ENCODE measurements at regions of chr12 and their contacts with region 1.

Region 1: DNA sequence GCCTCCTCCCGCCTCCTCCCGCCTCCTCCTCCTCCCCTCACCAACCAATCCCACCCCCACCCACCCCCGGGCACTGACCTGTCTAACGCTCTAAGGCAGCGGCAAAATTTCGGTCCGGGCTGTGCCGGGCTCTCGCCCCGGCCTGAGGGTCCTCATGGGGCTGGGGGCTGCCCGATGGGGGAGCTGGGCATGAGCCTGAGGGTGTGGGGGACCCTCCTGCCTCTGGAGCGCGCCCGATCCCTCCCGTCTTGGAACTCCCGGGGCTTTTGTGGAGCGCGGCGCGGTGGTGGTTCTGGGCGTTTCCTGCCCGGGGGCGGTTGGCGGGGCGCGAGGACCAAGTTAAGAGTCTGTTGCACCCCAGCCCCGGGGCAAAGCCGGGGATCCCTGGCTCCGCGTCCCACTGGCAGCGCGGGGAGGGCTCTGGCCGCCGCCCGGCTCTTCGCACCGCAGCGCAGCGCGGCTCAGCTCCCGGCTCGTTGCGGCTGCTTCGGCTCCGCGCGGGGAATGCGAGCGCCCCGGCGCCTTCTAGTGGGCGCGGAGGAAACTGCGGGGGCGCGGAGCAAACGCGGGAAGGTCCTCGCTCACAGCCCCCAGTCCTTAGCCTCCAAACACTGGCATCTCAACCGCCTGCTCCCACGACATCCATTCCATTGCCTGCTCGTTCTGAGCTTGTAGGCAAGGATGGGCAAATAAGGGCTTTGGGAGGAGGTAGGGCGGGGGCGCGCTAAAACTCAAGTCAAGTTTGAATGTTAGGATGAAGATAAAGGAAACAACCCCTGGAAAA is at the start of gene B4GALNT1:
- DNase-seq: peak; percentile 70
- ATAC-seq: peak; percentile 90
- H3K4me3 Mint-ChIP-seq: peak within 1 kb of the TSS; percentile 53
- H3K27ac Mint-ChIP-seq: no peak within 1 kb of the TSS
- H3K4me1 Mint-ChIP-seq: peaks cover 9% of the 10 kb centered on the region
- H3K27me3 Mint-ChIP-seq: peaks cover 63% of the 10 kb centered on the region
- total RNA-seq, gene B4GALNT1: 2.4 to 8.2 TPM

Region 2: DNA sequence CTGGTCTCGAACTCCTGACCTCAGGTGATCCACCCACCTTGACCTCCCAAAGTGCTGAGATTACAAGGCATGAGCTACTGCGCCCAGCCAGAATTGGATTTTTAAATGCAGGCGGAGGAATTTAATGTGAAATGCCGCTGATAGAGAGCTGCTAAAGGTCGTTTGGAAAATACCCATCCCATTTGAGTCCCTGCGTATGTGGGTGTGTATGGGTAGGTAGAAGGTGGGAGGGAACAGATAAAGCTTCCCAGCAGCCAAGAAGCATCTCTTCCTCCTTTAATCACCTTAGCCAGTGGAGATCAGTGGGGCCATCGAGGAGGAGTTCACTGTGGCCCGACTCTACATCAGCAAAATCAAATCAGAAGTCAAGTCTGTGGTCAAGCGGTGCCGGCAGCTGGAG is 58.1 kb before region 1 on chr12:
- CTCF ChIA-PET with region 1: no interaction called
- DNase-seq: no peak
- ATAC-seq: no peak
- H3K4me3 Mint-ChIP-seq: no peak overlapping the region
- H3K27ac Mint-ChIP-seq: no peak overlapping the region
- H3K4me1 Mint-ChIP-seq: no peaks in the 10 kb centered on the region
- H3K27me3 Mint-ChIP-seq: no peaks in the 10 kb centered on the region

Region 3: GRCh38 chr12:57590536-57591479 is 42.1 kb before region 1 on chr12 and contains the start of gene PIP4K2C:
- CTCF ChIA-PET with region 1: interaction called, 59 read pairs
- DNase-seq: peak; percentile 89
- ATAC-seq: peak; percentile 98
- H3K4me3 Mint-ChIP-seq: peak within 1 kb of the TSS; percentile 83
- H3K27ac Mint-ChIP-seq: peak within 1 kb of the TSS; percentile 81
- H3K4me1 Mint-ChIP-seq: peaks cover 22% of the 10 kb centered on the region
- H3K27me3 Mint-ChIP-seq: no peaks in the 10 kb centered on the region
- total RNA-seq, gene PIP4K2C: 21.4 to 22.2 TPM

Region 4: GRCh38 chr12:57621497-57622292 is 11.2 kb before region 1 on chr12:
- CTCF ChIA-PET with region 1: interaction called, 16 read pairs
- DNase-seq: peak; percentile 59
- ATAC-seq: peak; percentile 83
- H3K4me3 Mint-ChIP-seq: peak overlapping the region; percentile 54
- H3K27ac Mint-ChIP-seq: no peak overlapping the region
- H3K4me1 Mint-ChIP-seq: peaks cover 24% of the 10 kb centered on the region
- H3K27me3 Mint-ChIP-seq: peaks cover 98% of the 10 kb centered on the region

Region 5: DNA sequence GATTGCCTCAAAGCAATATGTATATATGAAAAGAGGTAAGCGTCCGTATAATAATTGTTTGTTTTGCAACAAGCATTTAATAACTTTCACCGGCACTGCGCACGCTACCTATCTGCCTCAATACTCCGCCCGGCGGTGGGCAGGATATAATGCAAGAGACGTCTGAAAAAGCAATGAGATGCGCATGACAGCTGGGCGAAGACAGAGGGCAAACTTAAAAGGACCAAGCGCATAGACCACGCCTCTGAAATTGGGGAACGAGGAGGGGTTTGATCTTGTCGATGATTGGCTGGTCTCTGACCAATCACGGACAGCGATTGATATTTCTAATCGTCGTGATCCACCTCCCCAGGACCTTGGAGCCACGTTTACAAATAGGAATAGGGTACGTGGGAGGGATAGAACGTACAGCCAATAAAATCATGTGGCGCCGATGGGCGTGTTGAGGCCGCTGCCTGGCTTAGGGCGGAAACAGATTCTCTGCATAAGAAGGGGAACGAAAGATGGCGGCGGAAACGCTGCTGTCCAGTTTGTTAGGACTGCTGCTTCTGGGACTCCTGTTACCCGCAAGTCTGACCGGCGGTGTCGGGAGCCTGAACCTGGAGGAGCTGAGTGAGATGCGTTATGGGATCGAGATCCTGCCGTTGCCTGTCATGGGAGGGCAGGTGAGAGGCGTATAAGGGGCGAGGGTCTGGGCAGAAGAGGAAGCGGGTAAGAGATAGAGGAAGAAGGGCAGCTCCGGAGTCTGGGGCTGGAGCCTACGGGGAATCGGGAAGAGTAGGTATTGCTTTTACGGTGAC is 61.0 kb after region 1 on chr12 and contains the start of gene OS9:
- CTCF ChIA-PET with region 1: interaction called, 16 read pairs
- DNase-seq: peak; percentile 99
- ATAC-seq: peak; percentile 99
- H3K4me3 Mint-ChIP-seq: no peak within 1 kb of the TSS
- H3K27ac Mint-ChIP-seq: no peak within 1 kb of the TSS
- H3K4me1 Mint-ChIP-seq: peaks cover 3% of the 10 kb centered on the region
- H3K27me3 Mint-ChIP-seq: peaks cover 15% of the 10 kb centered on the region
- total RNA-seq, gene OS9: 117 to 123 TPM

Region 6: GRCh38 chr12:57744777-57745484 is 112.0 kb after region 1 on chr12 and contains the start of gene TSPAN31:
- CTCF ChIA-PET with region 1: interaction called, 13 read pairs
- DNase-seq: peak; percentile 98
- ATAC-seq: peak; percentile 83
- H3K4me3 Mint-ChIP-seq: peak within 1 kb of the TSS; percentile 85
- H3K27ac Mint-ChIP-seq: peak within 1 kb of the TSS; percentile 95
- H3K4me1 Mint-ChIP-seq: peaks cover 49% of the 10 kb centered on the region
- H3K27me3 Mint-ChIP-seq: no peaks in the 10 kb centered on the region
- total RNA-seq, gene TSPAN31: 10.0 to 19.4 TPM

Region 7: GRCh38 chr12:57904848-57905811 is 272.2 kb after region 1 on chr12:
- CTCF ChIA-PET with region 1: no interaction called
- DNase-seq: peak; percentile 88
- ATAC-seq: peak; percentile 97
- H3K4me3 Mint-ChIP-seq: no peak overlapping the region
- H3K27ac Mint-ChIP-seq: no peak overlapping the region
- H3K4me1 Mint-ChIP-seq: peaks cover 8% of the 10 kb centered on the region
- H3K27me3 Mint-ChIP-seq: peaks cover 20% of the 10 kb centered on the region

Measured in activated CD8-positive, alpha-beta memory T cell treated with anti-CD3 and anti-CD28 coated beads, Interleukin-2, amount 10 ng/mL, durations not matched to agents 7 days and 5 days (primary cell).